AG04449 (cell line): ENCODE measurements at regions of chr9 and their contacts with region 1.

Region 1: GRCh38 chr9:22008736-22009562 is at the start of gene CDKN2B:
- DNase-seq: peak; percentile 72
- H3K4me3 ChIP-seq: peak within 1 kb of the TSS; percentile 81
- CTCF ChIP-seq: peak; percentile 84

Region 2: GRCh38 chr9:21836437-21837161 is 172.3 kb before region 1 on chr9:
- CTCF ChIA-PET with region 1: interaction called, 17 read pairs
- POLR2A ChIA-PET with region 1: interaction called, 9 read pairs
- DNase-seq: peak; percentile 97
- H3K4me3 ChIP-seq: no peak overlapping the region
- CTCF ChIP-seq: no peak

Region 3: GRCh38 chr9:21995177-21996086 is 13.5 kb before region 1 on chr9:
- CTCF ChIA-PET with region 1: interaction called, 129 read pairs
- POLR2A ChIA-PET with region 1: interaction called, 7 read pairs
- DNase-seq: no peak
- H3K4me3 ChIP-seq: peak overlapping the region; percentile 87
- CTCF ChIP-seq: peak; percentile 38

Region 4: GRCh38 chr9:22037954-22038690 is 29.2 kb after region 1 on chr9:
- CTCF ChIA-PET with region 1: interaction called, 69 read pairs
- POLR2A ChIA-PET with region 1: no interaction called
- DNase-seq: no peak
- H3K4me3 ChIP-seq: no peak overlapping the region
- CTCF ChIP-seq: peak; percentile 9

Region 5: GRCh38 chr9:22105005-22105722 is 96.2 kb after region 1 on chr9:
- CTCF ChIA-PET with region 1: interaction called, 20 read pairs
- POLR2A ChIA-PET with region 1: interaction called, 12 read pairs
- DNase-seq: no peak
- H3K4me3 ChIP-seq: no peak overlapping the region
- CTCF ChIP-seq: no peak

Region 6: GRCh38 chr9:22136451-22137163 is 127.7 kb after region 1 on chr9:
- CTCF ChIA-PET with region 1: interaction called, 24 read pairs
- POLR2A ChIA-PET with region 1: no interaction called
- DNase-seq: peak; percentile 89
- H3K4me3 ChIP-seq: no peak overlapping the region
- CTCF ChIP-seq: no peak

Region 7: DNA sequence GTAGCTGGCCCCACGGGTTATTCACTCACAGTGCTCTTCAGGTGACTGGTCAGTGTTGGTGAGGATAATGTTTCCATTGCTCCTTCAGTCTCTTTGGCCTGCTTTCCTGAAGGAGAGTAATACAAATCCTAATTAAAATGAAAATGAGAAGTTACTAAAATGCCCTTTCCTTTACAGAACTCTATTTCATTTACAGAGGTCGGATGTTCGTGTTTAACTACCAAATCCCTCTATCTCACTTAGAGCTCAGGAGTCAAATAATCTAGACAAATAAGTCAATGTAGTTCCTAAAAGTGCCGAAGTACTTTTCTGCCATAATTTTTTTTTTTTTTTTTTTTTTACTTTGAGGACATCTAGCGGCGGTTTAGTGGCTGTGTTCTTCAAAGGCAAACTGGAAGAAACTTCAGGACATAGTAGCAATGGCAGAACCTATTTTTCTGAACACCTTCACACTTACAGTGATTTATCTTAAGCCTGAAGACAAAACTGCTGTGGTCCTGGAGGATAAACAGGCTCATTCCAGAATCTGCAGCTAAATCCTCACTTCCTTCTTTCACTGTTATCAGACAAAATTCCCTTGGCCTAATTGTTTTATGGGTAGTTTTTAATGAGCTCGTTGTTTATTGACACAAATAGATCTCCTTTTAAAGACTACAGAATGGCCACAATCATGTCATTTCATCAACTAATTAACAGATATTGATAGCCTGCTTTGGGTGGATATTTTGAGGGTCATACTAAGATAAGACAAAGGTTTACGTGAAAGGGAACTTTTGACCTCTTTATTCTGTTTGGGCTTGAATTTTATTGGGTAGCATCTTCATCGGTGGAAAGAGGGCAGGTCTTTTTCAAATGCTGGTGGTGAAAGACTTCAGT is 230.1 kb after region 1 on chr9:
- CTCF ChIA-PET with region 1: interaction called, 67 read pairs
- POLR2A ChIA-PET with region 1: interaction called, 15 read pairs
- DNase-seq: no peak
- H3K4me3 ChIP-seq: no peak overlapping the region
- CTCF ChIP-seq: peak; percentile 13

Region 8: GRCh38 chr9:22539865-22540264 is 530.9 kb after region 1 on chr9:
- CTCF ChIA-PET with region 1: no interaction called
- POLR2A ChIA-PET with region 1: no interaction called
- DNase-seq: no peak
- H3K4me3 ChIP-seq: no peak overlapping the region
- CTCF ChIP-seq: no peak